Dendritic cell treated with granulocyte-macrophage colony-stimulating factor and Interleukin-4, amounts not matched to agents 40 ng/mL and 50 ng/mL, for 4 days (primary cell): ENCODE measurements at regions of chr3 and their contacts with region 1.

Region 1: DNA sequence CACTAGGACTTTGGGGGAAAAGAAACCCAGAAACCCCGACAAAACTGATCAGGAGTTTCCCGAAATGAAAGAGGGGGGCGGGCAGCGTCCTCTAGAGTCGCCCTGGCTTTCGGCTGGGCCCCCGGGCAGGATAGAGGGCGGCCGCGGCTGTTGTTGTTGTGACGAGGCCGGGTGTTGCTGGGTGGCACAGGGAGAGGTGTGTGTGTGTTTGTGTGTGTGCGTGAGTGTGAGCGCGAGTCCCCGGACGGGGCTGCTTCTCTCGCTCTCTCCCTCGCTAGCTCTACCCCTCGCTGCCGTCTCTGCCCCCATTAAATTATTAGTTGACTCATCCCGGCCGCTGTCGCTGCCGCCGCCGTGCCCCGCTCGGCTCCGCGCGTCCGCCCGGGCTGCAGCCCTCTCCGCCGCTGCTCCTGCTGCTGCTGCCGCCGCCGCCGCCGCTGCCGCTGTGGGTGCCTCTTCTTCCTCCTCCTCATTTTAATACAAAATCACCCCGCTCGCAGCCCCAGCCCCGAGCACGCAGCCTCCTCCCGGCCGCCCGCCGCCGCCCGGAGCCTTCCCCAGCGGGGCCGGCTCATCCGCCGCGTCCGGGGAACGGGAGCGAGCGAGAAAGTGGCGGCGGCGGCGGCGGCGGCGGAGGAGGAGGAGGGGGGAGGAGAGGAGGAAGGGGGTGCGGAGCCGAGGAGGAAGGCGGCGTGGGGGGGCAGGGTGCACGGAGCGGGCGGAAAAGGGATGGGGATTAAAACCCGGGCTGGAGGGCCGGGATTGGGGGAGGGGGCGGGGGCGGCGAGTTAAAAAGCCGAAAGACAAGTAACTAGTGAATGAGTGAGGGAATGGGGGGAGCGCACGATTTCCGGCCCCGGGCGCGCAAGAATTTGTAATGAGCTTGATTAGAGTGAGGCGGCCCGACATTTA is at the start of gene SATB1:
- H3K4me3 Mint-ChIP-seq: peak within 1 kb of the TSS; percentile 97
- H3K27ac Mint-ChIP-seq: peak within 1 kb of the TSS; percentile 91
- H3K4me1 Mint-ChIP-seq: peaks cover 26% of the 10 kb centered on the region
- H3K27me3 Mint-ChIP-seq: peaks cover 4% of the 10 kb centered on the region

Region 2: GRCh38 chr3:17742108-17742879 is 682.7 kb before region 1 on chr3 and contains the start of gene TBC1D5:
- intact Hi-C with region 1: loop called (anchors 10 kb)
- H3K4me3 Mint-ChIP-seq: peak within 1 kb of the TSS; percentile 96
- H3K27ac Mint-ChIP-seq: peak within 1 kb of the TSS; percentile 99
- H3K4me1 Mint-ChIP-seq: peaks cover 61% of the 10 kb centered on the region
- H3K27me3 Mint-ChIP-seq: no peaks in the 10 kb centered on the region

Region 3: GRCh38 chr3:18444595-18445400 is 19.8 kb after region 1 on chr3:
- intact Hi-C with region 1: loop called (anchors 2 kb)
- H3K4me3 Mint-ChIP-seq: peak overlapping the region; percentile 91
- H3K27ac Mint-ChIP-seq: peak overlapping the region; percentile 79
- H3K4me1 Mint-ChIP-seq: peaks cover 32% of the 10 kb centered on the region
- H3K27me3 Mint-ChIP-seq: peaks cover 31% of the 10 kb centered on the region

Region 4: GRCh38 chr3:18559331-18559842 is 134.4 kb after region 1 on chr3:
- intact Hi-C with region 1: loop called (anchors 10 kb)
- H3K4me3 Mint-ChIP-seq: no peak overlapping the region
- H3K27ac Mint-ChIP-seq: peak overlapping the region; percentile 3
- H3K4me1 Mint-ChIP-seq: peaks cover 19% of the 10 kb centered on the region
- H3K27me3 Mint-ChIP-seq: no peaks in the 10 kb centered on the region

Region 5: DNA sequence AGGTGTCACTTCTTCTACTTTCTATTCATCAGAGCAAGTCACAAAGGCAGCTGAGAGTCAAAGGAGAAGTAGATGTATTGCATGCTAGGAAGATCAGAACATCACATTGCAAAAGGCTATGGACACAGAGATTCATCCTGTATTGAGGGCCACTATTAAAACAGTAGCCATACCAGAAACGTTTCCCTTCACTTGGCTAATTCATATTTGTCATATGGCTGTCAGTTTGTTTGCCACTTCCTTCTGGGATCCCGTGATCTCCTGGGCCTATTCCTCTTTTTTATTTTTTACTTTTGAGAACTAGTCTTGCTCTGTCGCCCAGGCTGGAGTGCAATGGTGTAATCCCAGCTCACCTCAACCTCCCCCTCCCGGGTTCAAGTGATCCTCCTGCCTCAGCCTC is 184.2 kb after region 1 on chr3:
- intact Hi-C with region 1: no loop called
- H3K4me3 Mint-ChIP-seq: no peak overlapping the region
- H3K27ac Mint-ChIP-seq: peak overlapping the region; percentile 55
- H3K4me1 Mint-ChIP-seq: peaks cover 10% of the 10 kb centered on the region
- H3K27me3 Mint-ChIP-seq: no peaks in the 10 kb centered on the region

Region 6: GRCh38 chr3:18747383-18747782 is 322.4 kb after region 1 on chr3:
- intact Hi-C with region 1: loop called (anchors 5 kb)
- H3K4me3 Mint-ChIP-seq: no peak overlapping the region
- H3K27ac Mint-ChIP-seq: no peak overlapping the region
- H3K4me1 Mint-ChIP-seq: peaks cover 25% of the 10 kb centered on the region
- H3K27me3 Mint-ChIP-seq: no peaks in the 10 kb centered on the region

Region 7: DNA sequence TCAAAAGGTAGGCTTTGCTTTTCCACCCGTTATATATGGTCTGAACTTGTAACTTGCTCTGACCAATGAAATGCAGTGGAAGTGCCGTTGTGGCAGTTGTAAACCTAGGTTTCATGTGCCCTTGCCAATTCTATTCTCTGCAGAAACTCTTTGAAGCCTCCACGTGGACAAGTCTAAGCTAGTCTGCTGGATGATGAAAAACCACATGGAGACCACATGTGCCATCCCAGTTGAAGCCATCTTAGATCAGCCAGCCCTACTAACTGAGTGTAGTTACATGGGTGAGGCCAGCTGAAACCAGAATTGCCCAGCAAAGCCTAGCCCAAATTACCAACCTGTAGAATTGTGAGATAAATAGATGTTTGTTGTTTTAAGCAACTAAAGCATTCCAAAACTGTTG is 539.7 kb after region 1 on chr3:
- intact Hi-C with region 1: no loop called
- H3K4me3 Mint-ChIP-seq: no peak overlapping the region
- H3K27ac Mint-ChIP-seq: no peak overlapping the region
- H3K4me1 Mint-ChIP-seq: no peaks in the 10 kb centered on the region
- H3K27me3 Mint-ChIP-seq: no peaks in the 10 kb centered on the region